Ascending aorta (tissue), 2 donors: ENCODE measurements at regions of chrX and their contacts with region 1.

Region 1: GRCh38 chrX:130110379-130111219 is at the start of gene ELF4:
- DNase-seq: peak in 1 of 2 donors; percentile 75
- H3K4me3 ChIP-seq: peak within 1 kb of the TSS; percentile 63 to 94
- H3K27ac ChIP-seq: peak within 1 kb of the TSS; percentile 96
- H3K4me1 ChIP-seq: peaks cover 4% of the 10 kb centered on the region in 2 donors
- H3K27me3 ChIP-seq: no peaks in the 10 kb centered on the region
- CTCF ChIP-seq: no peak
- total RNA-seq, gene ELF4: 25.7 TPM

Region 2: DNA sequence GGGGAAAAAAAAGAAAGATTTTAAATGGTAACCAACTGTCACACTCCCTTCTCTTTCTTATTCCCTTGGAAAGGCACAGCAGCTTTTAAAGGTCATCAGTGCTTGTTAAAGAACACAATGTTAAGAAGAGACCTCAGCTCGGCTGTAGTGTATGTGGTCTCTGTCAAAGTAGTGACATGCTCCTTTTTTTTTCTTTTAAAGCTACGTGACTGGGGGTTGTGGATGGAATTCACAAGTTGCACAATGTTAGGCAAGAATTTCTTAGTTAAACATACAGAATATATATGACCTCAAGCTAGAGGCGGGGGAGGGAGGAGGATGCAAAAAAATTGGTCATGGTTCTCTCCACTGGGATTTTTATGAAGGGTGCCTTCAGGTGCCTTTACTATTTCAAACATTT is 524.9 kb before region 1 on chrX:
- intact Hi-C with region 1: no loop called
- DNase-seq: no peak
- H3K4me3 ChIP-seq: no peak overlapping the region
- H3K27ac ChIP-seq: no peak overlapping the region
- H3K4me1 ChIP-seq: no peaks in the 10 kb centered on the region
- H3K27me3 ChIP-seq: no peaks in the 10 kb centered on the region
- CTCF ChIP-seq: no peak

Region 3: GRCh38 chrX:129600981-129601424 is 509.6 kb before region 1 on chrX:
- intact Hi-C with region 1: loop called (anchors 5 kb)
- DNase-seq: no peak
- H3K4me3 ChIP-seq: no peak overlapping the region
- H3K27ac ChIP-seq: peak overlapping the region; percentile 57 to 72
- H3K4me1 ChIP-seq: no peaks in the 10 kb centered on the region
- H3K27me3 ChIP-seq: no peaks in the 10 kb centered on the region
- CTCF ChIP-seq: peak; percentile 26 to 62 (median 62)

Region 4: GRCh38 chrX:129706400-129707072 is 404.1 kb before region 1 on chrX:
- intact Hi-C with region 1: no loop called
- DNase-seq: peak in 1 of 2 donors; percentile 62
- H3K4me3 ChIP-seq: no peak overlapping the region
- H3K27ac ChIP-seq: peak overlapping the region; percentile 10 to 19
- H3K4me1 ChIP-seq: no peaks in the 10 kb centered on the region
- H3K27me3 ChIP-seq: no peaks in the 10 kb centered on the region
- CTCF ChIP-seq: no peak

Region 5: GRCh38 chrX:130120746-130121504 is 10.3 kb after region 1 on chrX:
- intact Hi-C with region 1: loop called (anchors 1 kb)
- DNase-seq: peak in 1 of 2 donors; percentile 88
- H3K4me3 ChIP-seq: peak overlapping the region; percentile 36 to 56
- H3K27ac ChIP-seq: peak overlapping the region; percentile 71 to 72
- H3K4me1 ChIP-seq: peaks cover 0 to 3% of the 10 kb centered on the region in 2 donors
- H3K27me3 ChIP-seq: no peaks in the 10 kb centered on the region
- CTCF ChIP-seq: peak; percentile 53 to 78 (median 65)

Region 6: GRCh38 chrX:130165703-130166502 is 55.3 kb after region 1 on chrX and contains the start of gene AIFM1:
- intact Hi-C with region 1: loop called (anchors 2 kb)
- DNase-seq: peak; percentile 70 to 94
- H3K4me3 ChIP-seq: peak within 1 kb of the TSS; percentile 49 to 76
- H3K27ac ChIP-seq: peak within 1 kb of the TSS; percentile 62 to 82
- H3K4me1 ChIP-seq: no peaks in the 10 kb centered on the region
- H3K27me3 ChIP-seq: no peaks in the 10 kb centered on the region
- CTCF ChIP-seq: no peak
- total RNA-seq, gene AIFM1: 0.75 TPM